ENCODE measurements at regions of chr12 and their contacts with region 1.

Region 1: DNA sequence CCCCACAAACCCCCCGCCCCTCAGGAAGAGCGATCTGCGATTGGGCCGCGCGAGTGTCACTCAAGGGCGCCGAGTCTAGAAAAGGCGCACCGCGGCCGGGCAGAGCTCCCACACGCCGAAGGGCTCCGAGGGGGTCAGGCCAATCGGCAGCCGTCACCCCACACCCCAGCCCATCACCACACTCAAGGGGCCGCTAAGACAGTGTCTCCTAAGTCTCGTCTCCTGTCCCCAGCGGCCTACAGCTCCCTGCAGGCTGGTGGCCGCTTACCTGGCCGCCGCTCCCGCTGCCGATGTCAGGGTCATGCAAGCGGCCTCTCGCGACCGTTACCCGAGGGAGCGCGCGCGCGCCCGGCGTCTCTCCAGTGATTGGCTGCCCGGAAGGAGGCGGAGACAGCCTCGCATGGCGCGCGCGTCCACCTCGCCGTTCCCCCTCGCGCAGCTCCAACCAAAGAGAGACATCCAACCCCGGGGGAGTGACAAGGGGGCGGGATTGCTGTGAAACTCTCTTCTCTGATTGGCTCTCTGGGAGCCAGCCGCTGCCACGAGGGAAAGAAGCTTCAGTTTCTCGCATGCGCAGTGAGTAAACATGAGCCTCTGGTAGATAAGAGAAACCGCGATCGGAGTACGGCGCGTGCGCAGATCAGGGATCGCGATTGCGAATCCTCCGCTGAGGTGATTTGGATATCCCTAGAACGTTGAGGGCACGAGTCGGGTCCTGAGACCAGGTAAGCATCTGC is at the starts of genes MPHOSPH9 and MTRFR:
- DNase-seq: peak; percentile 99
- H3K4me3 ChIP-seq: peak within 1 kb of the TSS; percentile 71 to 97 (median 85)
- H3K27ac ChIP-seq: peak within 1 kb of the TSS; percentile 88 to 96 (median 94)
- H3K4me1 ChIP-seq: peaks cover 41 to 89% (median 85%) of the 10 kb centered on the region in 6 donors
- H3K27me3 ChIP-seq: no peaks in the 10 kb centered on the region
- CTCF ChIP-seq: peak in 4 of 11 experiments; percentile 12 to 50 (median 19)
- POLR2A ChIP-seq: peak; percentile 67 to 98 (median 98)
- total RNA-seq, gene MPHOSPH9: 34.6 to 97.3 (median 43.8) TPM
- total RNA-seq, gene MTRFR: 11.9 to 21.0 (median 14.8) TPM

Region 2: GRCh38 chr12:122851820-122852219 is 381.2 kb before region 1 on chr12:
- intact Hi-C with region 1: loop called (anchors 10 kb)
- DNase-seq: no peak
- H3K4me3 ChIP-seq: no peak overlapping the region
- H3K27ac ChIP-seq: peak overlapping the region in 2 of 8 donors; percentile 14 to 40
- H3K4me1 ChIP-seq: peaks cover 0 to 9% (median 0%) of the 10 kb centered on the region in 6 donors
- H3K27me3 ChIP-seq: no peaks in the 10 kb centered on the region
- CTCF ChIP-seq: no peak
- POLR2A ChIP-seq: no peak

Region 3: GRCh38 chr12:122980183-122981046 is 252.6 kb before region 1 on chr12 and contains the start of gene ARL6IP4:
- intact Hi-C with region 1: loop called (anchors 5 kb)
- DNase-seq: peak; percentile 95
- H3K4me3 ChIP-seq: peak within 1 kb of the TSS; percentile 83 to 99 (median 96)
- H3K27ac ChIP-seq: peak within 1 kb of the TSS; percentile 89 to 95 (median 93)
- H3K4me1 ChIP-seq: peaks cover 58 to 95% (median 90%) of the 10 kb centered on the region in 6 donors
- H3K27me3 ChIP-seq: no peaks in the 10 kb centered on the region
- CTCF ChIP-seq: peak in 4 of 11 experiments; percentile 12 to 29 (median 14)
- POLR2A ChIP-seq: peak in 1 of 3 donors; percentile 64
- total RNA-seq, gene ARL6IP4: 150 to 202 (median 181) TPM

Region 4: DNA sequence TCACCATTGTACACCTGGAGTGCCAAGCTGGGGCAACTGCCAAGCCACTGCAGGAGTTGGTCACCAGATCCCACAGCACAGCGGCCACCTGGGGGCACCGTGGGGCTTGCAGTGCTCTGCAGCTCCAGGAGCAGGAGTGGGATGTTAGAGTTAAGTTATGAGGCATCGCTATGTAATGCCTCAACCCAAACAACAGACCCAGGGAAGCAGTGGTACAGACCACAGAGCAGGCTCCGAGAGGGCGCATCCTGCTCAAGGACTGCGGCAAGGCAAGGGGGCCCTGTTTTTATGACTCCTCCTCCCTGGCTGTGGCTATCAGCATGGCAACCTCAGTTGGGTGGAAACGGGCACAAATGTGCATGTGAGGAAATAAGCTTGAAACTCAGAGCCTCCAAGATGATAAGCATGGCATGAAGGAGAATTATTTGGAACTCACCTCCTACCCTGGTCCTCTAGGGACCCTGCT is 189.4 kb before region 1 on chr12:
- intact Hi-C with region 1: loop called (anchors 5 kb)
- DNase-seq: peak; percentile 95
- H3K4me3 ChIP-seq: no peak overlapping the region
- H3K27ac ChIP-seq: peak overlapping the region in 3 of 8 donors; percentile 3 to 33 (median 14)
- H3K4me1 ChIP-seq: peaks cover 9 to 39% (median 16%) of the 10 kb centered on the region in 6 donors
- H3K27me3 ChIP-seq: no peaks in the 10 kb centered on the region
- CTCF ChIP-seq: peak in 10 of 11 experiments; percentile 56 to 82 (median 71)
- POLR2A ChIP-seq: no peak